Cardiac septum (tissue), 1 donor: ENCODE measurements at regions of chr11 and their contacts with region 1.

Region 1: GRCh38 chr11:86955361-86956120 is at the start of gene FZD4:
- DNase-seq: peak; percentile 94
- total RNA-seq, gene FZD4: 14.4 TPM

Region 2: DNA sequence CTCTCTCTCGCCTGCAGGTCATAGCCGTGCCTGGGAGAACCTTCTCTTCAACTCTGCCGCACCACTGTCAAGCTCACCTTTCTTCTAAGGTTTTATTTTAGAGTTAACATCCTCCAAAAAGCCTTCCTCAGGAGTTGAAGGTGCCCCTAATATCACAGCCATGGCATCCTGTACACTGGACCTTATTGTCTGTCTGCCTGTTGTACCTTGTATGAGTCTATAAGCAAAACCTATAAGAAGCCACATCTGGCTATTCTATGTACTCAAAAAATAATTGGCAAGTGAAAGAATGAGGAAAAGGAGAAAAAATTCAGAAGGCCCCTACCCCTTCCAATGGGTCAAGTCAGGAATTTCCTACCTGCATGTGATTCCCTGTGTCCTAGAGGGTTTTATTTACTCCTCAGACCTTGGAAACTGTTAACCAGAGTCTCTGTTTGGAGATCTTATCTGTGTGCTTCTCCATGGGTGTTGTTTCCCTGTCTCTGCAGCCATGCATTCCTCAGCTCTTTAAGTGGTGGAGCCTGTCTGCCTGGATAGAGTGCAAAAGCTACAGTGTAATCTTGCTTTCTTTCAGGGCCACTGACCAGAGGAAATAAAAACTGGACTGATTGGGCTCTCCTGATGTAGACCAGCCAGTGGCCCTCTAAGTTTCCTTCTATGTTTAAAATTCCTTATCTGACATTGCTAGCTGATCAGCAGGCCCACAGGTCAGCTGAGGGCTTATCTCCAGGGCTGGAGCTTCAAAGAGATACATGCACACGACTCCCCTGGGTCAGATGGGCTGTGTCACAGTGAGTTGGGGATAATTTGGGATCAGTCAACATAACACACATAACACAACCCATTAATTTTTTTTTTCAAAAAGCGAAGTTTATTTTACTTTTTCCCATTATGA is 44.6 kb after region 1 on chr11:
- intact Hi-C with region 1: loop called (anchors 5 kb)
- DNase-seq: no peak

Region 3: DNA sequence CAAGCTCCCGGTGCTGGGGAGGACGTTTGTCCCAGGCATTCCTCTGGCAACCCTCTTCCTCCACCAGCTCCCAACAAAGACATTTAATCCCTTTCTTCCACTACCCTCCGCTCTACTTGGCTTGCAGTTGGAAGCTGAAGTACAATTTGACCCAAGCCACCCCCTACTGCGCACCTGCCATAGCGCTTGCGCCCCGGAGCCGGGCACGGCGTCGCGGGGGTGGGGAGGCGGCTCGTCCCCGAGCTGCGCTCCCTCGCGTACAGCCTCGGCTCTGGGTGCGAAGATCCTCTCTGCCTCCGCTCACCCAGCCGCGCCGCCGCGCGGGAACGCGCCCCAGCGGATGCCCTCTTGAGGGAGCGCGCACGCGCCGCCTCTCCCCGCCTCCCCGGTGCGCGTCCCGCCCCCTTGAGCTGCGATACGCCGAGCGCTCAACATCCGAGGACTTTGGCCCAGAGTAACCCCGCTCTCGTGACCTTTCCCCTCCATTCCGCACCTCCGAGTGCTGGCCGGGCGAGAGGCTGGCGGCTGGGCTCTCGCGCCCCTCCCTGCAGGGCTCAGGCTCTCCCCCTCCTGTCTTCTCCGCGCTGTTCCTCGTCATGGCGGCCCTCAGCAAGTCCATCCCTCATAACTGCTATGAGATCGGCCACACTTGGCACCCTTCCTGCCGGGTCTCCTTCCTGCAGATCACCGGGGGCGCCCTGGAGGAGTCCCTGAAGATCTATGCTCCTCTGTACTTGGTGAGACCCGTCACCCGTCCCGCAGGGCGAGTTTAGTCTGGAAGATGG is 82.1 kb after region 1 on chr11 and contains the start of gene TMEM135:
- intact Hi-C with region 1: loop called (anchors 10 kb)
- DNase-seq: peak; percentile 95
- total RNA-seq, gene TMEM135: 6.4 TPM